ENCODE measurements at regions of chr13 and their contacts with region 1.

Region 1: GRCh38 chr13:25301347-25302047 is at the start of gene NUP58:
- DNase-seq: peak; percentile 94
- H3K4me3 Mint-ChIP-seq: peak within 1 kb of the TSS; percentile 96
- H3K27ac Mint-ChIP-seq: peak within 1 kb of the TSS; percentile 94
- H3K4me1 Mint-ChIP-seq: peaks cover 35% of the 10 kb centered on the region
- H3K27me3 Mint-ChIP-seq: peaks cover 5% of the 10 kb centered on the region
- total RNA-seq, gene NUP58: 131 and 142 TPM in 2 replicates

Region 2: DNA sequence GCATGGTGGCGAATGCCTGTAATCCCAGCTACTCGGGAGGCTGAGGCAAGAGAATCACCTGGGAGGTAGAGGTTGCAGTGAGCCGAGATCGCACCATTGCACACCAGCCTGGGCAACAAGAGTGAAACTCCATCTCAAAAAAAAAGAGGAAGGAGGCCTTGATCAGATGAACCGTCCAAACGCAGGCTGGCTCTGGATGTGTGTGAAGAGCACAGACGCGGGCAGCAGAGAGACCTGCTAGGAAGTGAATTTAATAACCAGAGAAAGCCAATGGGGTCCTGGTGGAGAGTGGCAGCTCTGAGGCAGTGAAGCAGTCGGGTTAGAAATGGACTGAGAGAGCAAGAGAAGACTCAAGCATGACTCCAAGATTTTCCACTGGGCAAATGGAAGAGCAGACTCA is 401.0 kb before region 1 on chr13:
- intact Hi-C with region 1: no loop called
- DNase-seq: no peak
- H3K4me3 Mint-ChIP-seq: no peak overlapping the region
- H3K27ac Mint-ChIP-seq: no peak overlapping the region
- H3K4me1 Mint-ChIP-seq: peaks cover 4% of the 10 kb centered on the region
- H3K27me3 Mint-ChIP-seq: no peaks in the 10 kb centered on the region

Region 3: GRCh38 chr13:25267715-25268114 is 33.8 kb before region 1 on chr13:
- intact Hi-C with region 1: loop called (anchors 5 kb)
- DNase-seq: no peak
- H3K4me3 Mint-ChIP-seq: no peak overlapping the region
- H3K27ac Mint-ChIP-seq: no peak overlapping the region
- H3K4me1 Mint-ChIP-seq: no peaks in the 10 kb centered on the region
- H3K27me3 Mint-ChIP-seq: no peaks in the 10 kb centered on the region

Region 4: DNA sequence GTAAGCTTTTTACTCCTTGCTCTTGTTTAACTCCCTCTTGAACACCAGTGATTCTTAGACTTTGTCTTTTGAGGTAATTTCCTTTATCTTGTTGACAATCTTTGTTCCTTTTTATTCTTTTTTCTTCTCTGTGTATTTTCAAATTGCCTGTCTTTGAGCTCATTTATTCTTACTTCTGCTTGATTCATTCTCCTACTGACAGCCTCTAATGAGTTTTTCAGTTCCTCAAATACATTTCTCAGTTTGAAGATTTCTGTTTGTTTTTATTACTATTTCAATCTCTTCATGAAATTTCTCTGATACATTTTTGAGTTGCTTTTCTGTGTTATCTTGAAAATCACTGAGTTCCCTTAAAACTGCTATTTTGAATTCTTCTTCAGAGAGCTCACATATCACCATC is 224.4 kb after region 1 on chr13:
- intact Hi-C with region 1: no loop called
- DNase-seq: no peak
- H3K4me3 Mint-ChIP-seq: no peak overlapping the region
- H3K27ac Mint-ChIP-seq: no peak overlapping the region
- H3K4me1 Mint-ChIP-seq: no peaks in the 10 kb centered on the region
- H3K27me3 Mint-ChIP-seq: no peaks in the 10 kb centered on the region